ENCODE measurements at regions of chr7 and their contacts with region 1.

Region 1: GRCh38 chr7:107194049-107194448 is 25.2 kb downstream of the HBP1 start:
- DNase-seq: no peak
- H3K4me3 ChIP-seq: no peak overlapping the region
- H3K27ac ChIP-seq: no peak overlapping the region
- H3K4me1 ChIP-seq: peaks cover 0 to 2% (median 0%) of the 10 kb centered on the region in 4 experiments
- H3K27me3 ChIP-seq: no peaks in the 10 kb centered on the region

Region 2: GRCh38 chr7:107173691-107174406 is 20.2 kb before region 1 on chr7:
- CTCF ChIA-PET with region 1: interaction called, 11 read pairs
- POLR2A ChIA-PET with region 1: interaction called, 9 read pairs
- DNase-seq: no peak
- H3K4me3 ChIP-seq: no peak overlapping the region
- H3K27ac ChIP-seq: no peak overlapping the region
- H3K4me1 ChIP-seq: peaks cover 10 to 37% (median 17%) of the 10 kb centered on the region in 4 experiments
- H3K27me3 ChIP-seq: no peaks in the 10 kb centered on the region

Region 3: DNA sequence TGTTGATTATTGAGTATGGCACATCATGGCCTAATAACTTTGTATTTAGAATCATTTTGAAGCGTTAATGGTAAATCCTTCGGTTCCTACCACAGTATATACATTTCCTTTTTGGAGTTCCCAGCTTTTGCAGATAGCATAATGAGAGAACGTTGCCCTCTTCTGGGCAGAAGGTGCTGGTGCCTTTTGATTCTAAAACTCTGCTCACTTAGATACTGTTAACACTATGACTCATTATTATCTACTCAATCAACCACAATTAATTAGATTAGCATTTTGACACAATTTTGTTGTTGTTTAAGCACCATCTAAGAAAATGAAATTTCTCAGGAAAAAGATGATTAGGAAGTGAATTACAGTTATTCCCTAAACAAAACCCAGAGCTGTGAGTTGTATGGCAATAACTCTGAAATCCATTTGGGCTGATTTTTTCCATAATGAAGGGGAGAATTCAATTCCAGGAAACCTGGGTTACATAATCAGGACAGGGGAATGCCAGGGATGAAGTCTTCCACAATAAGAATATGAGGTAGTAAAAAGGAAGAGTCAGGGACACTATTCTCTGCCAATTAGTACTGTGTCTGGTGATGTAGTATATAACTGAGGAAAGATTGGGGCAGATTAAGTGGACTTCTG is 685.5 kb after region 1 on chr7:
- CTCF ChIA-PET with region 1: interaction called, 10 read pairs
- POLR2A ChIA-PET with region 1: no interaction called
- DNase-seq: peak; percentile 78 to 79 (median 78)
- H3K4me3 ChIP-seq: no peak overlapping the region
- H3K27ac ChIP-seq: no peak overlapping the region
- H3K4me1 ChIP-seq: peaks cover 4 to 28% (median 18%) of the 10 kb centered on the region in 4 experiments
- H3K27me3 ChIP-seq: no peaks in the 10 kb centered on the region